ENCODE measurements at regions of chr14 and their contacts with region 1.

Region 1: DNA sequence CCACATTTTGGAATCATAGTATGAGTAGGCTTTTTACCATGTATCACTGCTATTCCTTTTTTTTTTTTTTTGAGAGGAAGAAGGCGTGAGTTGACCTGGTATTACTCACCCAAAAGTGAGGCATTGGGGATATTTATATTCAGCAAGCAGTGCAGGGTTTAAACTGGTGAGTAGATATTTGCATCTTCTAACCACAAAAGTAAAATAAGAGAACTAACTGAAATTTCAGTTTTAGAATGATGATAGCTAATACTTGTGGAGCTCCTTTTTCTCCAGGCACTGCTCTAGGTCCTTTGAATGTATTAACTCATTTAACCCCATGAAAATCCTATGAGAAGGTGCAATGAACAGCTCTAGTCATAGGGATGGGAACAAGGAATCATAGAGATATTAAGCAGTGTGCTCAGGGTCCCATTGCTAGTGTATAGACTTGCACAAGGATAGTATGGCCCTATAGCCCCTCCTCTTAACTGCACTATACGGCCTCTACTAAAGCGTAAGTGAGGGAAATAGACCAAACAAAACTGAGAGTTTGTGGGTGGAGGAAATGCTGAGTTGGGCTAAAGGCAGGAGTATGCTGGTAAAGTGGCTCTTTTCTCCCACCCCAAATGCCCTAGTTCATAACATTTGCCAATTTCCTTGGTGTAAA is 104.3 kb upstream of the MAX start:
- DNase-seq: peak; percentile 78
- H3K4me3 Mint-ChIP-seq: peak overlapping the region; percentile 71
- H3K27ac Mint-ChIP-seq: peak overlapping the region; percentile 90
- H3K4me1 Mint-ChIP-seq: peaks cover 62% of the 10 kb centered on the region
- H3K27me3 Mint-ChIP-seq: no peaks in the 10 kb centered on the region

Region 2: DNA sequence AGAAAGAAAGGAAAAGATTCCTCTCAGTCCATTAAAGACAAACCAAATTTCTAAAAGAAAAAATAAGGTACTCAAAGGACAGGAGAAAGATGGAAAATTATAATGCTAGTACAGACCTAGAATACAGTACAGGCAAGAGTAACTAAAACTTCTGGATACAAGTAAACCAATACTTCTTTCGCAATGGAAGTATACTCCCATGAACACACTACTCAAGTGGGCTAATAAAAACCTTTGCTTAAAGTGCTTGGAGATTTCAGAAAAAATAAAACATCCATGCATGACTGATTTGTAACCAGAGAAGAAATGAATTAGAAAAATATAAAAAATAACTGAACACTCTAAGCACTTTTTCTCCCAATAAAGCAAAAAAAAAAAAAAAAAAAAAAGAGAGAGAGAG is 706.5 kb before region 1 on chr14:
- intact Hi-C with region 1: no loop called
- DNase-seq: no peak
- H3K4me3 Mint-ChIP-seq: peak overlapping the region; percentile 94
- H3K27ac Mint-ChIP-seq: peak overlapping the region; percentile 49
- H3K4me1 Mint-ChIP-seq: peaks cover 42% of the 10 kb centered on the region
- H3K27me3 Mint-ChIP-seq: peaks cover 1% of the 10 kb centered on the region

Region 3: DNA sequence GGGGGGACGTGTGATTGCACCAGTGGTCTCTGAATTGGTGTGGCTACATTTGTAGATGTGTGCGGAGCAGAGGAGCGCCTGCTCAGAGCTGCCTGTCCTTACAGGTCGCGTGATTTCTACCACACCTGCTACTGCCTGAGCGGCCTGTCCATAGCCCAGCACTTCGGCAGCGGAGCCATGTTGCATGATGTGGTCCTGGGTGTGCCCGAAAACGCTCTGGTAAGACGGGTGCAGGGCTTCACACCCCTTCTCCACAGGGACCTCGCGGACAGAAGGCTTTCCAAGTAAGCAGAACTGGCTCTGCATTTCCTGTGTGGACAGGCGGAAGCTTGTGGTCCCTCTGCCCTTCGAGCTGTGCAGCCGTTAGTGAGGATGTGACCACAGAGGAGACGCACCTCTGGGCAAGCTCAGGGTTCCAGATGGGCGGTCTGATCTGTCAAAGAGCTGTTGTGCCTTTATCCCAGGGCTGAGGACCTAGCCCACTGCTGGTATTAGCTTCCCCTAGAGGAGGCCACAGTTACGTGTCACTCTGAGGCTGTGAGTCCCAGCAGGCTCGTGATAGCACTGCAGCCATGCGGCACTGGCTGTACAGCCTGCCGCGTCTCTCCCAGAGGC is 152.0 kb before region 1 on chr14:
- intact Hi-C with region 1: no loop called
- DNase-seq: no peak
- H3K4me3 Mint-ChIP-seq: no peak overlapping the region
- H3K27ac Mint-ChIP-seq: no peak overlapping the region
- H3K4me1 Mint-ChIP-seq: peaks cover 3% of the 10 kb centered on the region
- H3K27me3 Mint-ChIP-seq: no peaks in the 10 kb centered on the region

Region 4: DNA sequence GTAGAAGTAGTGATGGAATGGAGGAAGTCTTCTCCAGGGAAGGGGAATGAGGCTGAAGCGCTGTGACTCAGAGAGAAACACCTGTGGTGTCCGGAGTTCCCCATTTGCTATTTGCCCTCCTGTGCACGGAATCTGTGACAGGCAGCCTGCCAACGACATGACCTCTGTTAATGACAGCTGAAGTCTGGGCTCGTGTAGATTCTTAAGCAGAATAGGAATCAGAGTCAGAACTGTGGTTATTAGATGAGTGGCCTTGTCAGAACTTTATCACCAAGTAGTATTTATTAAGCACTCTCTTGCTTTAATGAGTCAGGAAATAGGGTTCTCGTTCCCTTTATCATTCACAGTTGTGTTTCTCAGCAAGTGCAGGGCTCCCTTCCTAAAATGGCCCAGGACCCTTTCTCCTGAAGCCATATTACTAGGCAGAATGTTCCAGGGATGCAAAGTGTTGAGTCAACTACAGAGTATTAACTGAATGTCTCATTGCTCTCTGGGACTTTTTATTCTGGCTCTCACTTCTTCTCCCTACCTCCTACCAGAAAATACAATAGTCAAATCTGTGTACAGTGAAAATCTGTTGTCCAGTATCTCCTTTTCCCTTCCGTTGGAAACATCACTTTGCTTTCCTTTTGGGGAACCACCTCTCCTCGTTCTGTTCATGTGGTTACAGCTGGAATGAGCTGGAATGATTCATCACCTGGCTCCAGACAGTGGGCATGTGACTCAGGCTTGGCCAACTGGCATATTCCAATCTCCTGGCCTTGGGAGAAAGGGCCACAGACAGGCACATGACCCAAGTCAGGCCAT is 26.5 kb before region 1 on chr14:
- intact Hi-C with region 1: loop called (anchors 1 kb)
- DNase-seq: peak; percentile 78
- H3K4me3 Mint-ChIP-seq: peak overlapping the region; percentile 10
- H3K27ac Mint-ChIP-seq: peak overlapping the region; percentile 45
- H3K4me1 Mint-ChIP-seq: peaks cover 20% of the 10 kb centered on the region
- H3K27me3 Mint-ChIP-seq: no peaks in the 10 kb centered on the region

Region 5: GRCh38 chr14:65190312-65190711 is 16.3 kb before region 1 on chr14:
- intact Hi-C with region 1: no loop called
- DNase-seq: no peak
- H3K4me3 Mint-ChIP-seq: no peak overlapping the region
- H3K27ac Mint-ChIP-seq: no peak overlapping the region
- H3K4me1 Mint-ChIP-seq: peaks cover 16% of the 10 kb centered on the region
- H3K27me3 Mint-ChIP-seq: peaks cover 2% of the 10 kb centered on the region

Region 6: GRCh38 chr14:65302571-65303189 is 96.1 kb after region 1 on chr14:
- intact Hi-C with region 1: loop called (anchors 1 kb)
- DNase-seq: peak; percentile 82
- H3K4me3 Mint-ChIP-seq: peak overlapping the region; percentile 62
- H3K27ac Mint-ChIP-seq: peak overlapping the region; percentile 97
- H3K4me1 Mint-ChIP-seq: peaks cover 67% of the 10 kb centered on the region
- H3K27me3 Mint-ChIP-seq: no peaks in the 10 kb centered on the region

Region 7: DNA sequence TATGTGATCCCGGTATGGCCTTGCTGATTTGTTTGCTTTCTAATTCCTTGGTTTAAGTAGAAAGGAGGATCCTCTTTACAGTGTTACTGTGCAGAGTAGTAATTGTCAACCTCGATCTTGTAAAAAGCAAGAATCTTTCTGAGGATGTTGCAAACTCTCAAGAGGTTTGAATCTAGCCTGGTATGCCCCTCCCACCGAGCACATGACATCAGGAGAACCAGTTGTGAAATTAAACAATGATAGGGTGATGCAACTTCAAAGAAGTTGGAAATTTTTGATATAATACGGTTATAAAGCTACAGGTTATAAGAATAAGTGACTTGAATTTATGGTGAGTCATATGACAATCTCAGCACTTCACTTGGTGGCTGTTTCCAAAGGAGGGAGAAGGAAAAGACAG is 171.0 kb after region 1 on chr14:
- intact Hi-C with region 1: no loop called
- DNase-seq: no peak
- H3K4me3 Mint-ChIP-seq: no peak overlapping the region
- H3K27ac Mint-ChIP-seq: no peak overlapping the region
- H3K4me1 Mint-ChIP-seq: peaks cover 21% of the 10 kb centered on the region
- H3K27me3 Mint-ChIP-seq: no peaks in the 10 kb centered on the region

Region 8: GRCh38 chr14:65412032-65412846 is 205.7 kb after region 1 on chr14 and contains the start of gene FUT8:
- intact Hi-C with region 1: loop called (anchors 1 kb)
- DNase-seq: peak; percentile 97
- H3K4me3 Mint-ChIP-seq: peak within 1 kb of the TSS; percentile 99
- H3K27ac Mint-ChIP-seq: peak within 1 kb of the TSS; percentile 96
- H3K4me1 Mint-ChIP-seq: peaks cover 38% of the 10 kb centered on the region
- H3K27me3 Mint-ChIP-seq: no peaks in the 10 kb centered on the region
- total RNA-seq, gene FUT8: 125 and 137 TPM in 2 replicates

Region 9: GRCh38 chr14:65847075-65847847 is 640.7 kb after region 1 on chr14:
- intact Hi-C with region 1: loop called (anchors 1 kb)
- DNase-seq: peak; percentile 95
- H3K4me3 Mint-ChIP-seq: peak overlapping the region; percentile 71
- H3K27ac Mint-ChIP-seq: peak overlapping the region; percentile 87
- H3K4me1 Mint-ChIP-seq: peaks cover 67% of the 10 kb centered on the region
- H3K27me3 Mint-ChIP-seq: no peaks in the 10 kb centered on the region